Caco-2 (cell line): ENCODE measurements at regions of chr3 and their contacts with region 1.

Region 1: GRCh38 chr3:192917404-192918274 is at the start of gene MB21D2:
- DNase-seq: peak; percentile 84 to 86
- H3K4me3 ChIP-seq: peak within 1 kb of the TSS; percentile 95
- H3K4me3 Mint-ChIP-seq: peak within 1 kb of the TSS; percentile 100
- H3K27ac Mint-ChIP-seq: peak within 1 kb of the TSS; percentile 99
- H3K4me1 ChIP-seq: peaks cover 39% of the 10 kb centered on the region
- H3K4me1 Mint-ChIP-seq: peaks cover 34% of the 10 kb centered on the region
- H3K27me3 ChIP-seq: no peaks in the 10 kb centered on the region
- H3K27me3 Mint-ChIP-seq: no peaks in the 10 kb centered on the region
- CTCF ChIP-seq: no peak
- total RNA-seq, gene MB21D2: 10.6 and 11.0 TPM in 2 replicates

Region 2: DNA sequence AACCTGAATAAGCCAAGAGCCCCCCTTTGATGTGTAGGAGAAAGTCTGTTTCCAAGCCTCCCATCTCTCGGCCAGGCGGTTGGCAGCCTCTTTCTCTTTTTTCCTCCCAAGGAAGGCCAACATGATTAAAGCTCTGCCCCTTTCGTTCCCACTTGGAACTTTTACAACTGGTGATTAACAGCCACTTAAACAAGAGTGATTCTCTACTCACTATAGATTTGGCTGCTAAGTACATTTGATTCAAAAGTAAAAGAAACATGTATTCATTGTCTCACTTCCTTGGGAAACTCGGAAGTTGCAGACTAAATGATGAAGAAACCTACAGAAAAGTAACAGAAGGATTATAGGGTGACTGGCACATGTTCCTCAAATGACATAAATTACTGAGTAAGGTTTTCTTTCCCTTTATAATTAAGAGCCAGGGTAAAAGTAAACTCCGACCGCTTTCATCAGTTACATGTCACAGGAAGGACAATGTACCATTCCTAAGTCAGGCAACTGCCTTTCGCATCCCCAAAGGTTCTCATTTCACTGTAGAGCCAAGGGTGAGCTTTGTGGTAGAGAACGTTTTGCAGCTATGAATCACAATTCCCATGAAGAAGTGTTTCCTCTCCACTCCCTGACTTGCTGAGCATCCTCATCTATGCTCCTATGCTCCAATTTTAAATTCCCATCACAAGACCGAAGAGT is 72.7 kb before region 1 on chr3:
- CTCF ChIA-PET with region 1: no interaction called
- POLR2A ChIA-PET with region 1: no interaction called
- intact Hi-C with region 1: loop called (anchors 1 kb)
- DNase-seq: no peak
- H3K4me3 ChIP-seq: no peak overlapping the region
- H3K4me3 Mint-ChIP-seq: no peak overlapping the region
- H3K27ac Mint-ChIP-seq: no peak overlapping the region
- H3K4me1 ChIP-seq: peaks cover 30% of the 10 kb centered on the region
- H3K4me1 Mint-ChIP-seq: peaks cover 8% of the 10 kb centered on the region
- H3K27me3 ChIP-seq: no peaks in the 10 kb centered on the region
- H3K27me3 Mint-ChIP-seq: no peaks in the 10 kb centered on the region
- CTCF ChIP-seq: no peak

Region 3: DNA sequence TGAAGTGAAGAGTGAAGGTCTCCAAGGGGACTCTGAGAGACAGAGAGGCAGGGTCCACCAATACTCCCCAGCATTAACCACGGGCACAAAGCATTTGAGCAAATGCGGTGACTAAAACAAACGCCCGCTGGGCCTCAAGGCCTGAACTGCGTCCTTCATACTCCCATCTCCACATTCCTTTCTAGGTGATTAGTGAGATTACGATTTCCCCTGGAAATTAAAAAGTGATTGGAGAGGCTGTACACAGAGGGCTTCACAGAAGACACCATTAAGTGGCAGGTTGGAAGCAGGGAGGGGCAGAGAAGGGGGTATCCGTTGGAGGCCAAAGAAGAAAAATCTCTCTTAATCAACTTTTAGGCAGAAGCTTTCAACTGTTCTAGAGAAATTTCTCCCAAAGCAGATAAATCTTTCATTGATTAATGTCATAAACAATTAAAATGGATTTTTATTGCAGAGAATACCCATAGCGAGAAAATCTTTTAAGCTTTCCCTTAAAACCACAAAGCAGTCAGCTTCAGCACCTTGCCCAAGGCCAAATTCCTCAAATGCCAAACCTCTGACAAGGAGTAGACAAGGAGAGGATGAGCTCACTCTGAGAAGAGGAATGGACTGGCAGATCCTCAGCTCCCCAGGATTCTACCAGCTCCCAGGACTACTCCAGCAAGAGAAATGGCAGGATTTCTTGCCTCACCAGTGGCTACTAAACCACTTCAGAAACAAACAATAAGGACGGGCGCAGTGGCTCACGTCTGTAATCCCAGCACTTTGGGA is 38.1 kb before region 1 on chr3:
- CTCF ChIA-PET with region 1: interaction called, 3 read pairs
- POLR2A ChIA-PET with region 1: interaction called, 9 read pairs
- intact Hi-C with region 1: loop called (anchors 5 kb)
- DNase-seq: peak; percentile 82 to 87
- H3K4me3 ChIP-seq: no peak overlapping the region
- H3K4me3 Mint-ChIP-seq: peak overlapping the region; percentile 66
- H3K27ac Mint-ChIP-seq: no peak overlapping the region
- H3K4me1 ChIP-seq: peaks cover 38% of the 10 kb centered on the region
- H3K4me1 Mint-ChIP-seq: peaks cover 43% of the 10 kb centered on the region
- H3K27me3 ChIP-seq: no peaks in the 10 kb centered on the region
- H3K27me3 Mint-ChIP-seq: no peaks in the 10 kb centered on the region
- CTCF ChIP-seq: no peak

Region 4: GRCh38 chr3:192896689-192897431 is 20.8 kb before region 1 on chr3:
- CTCF ChIA-PET with region 1: interaction called, 3 read pairs
- POLR2A ChIA-PET with region 1: no interaction called
- intact Hi-C with region 1: loop called (anchors 1 kb)
- DNase-seq: peak; percentile 74 to 81
- H3K4me3 ChIP-seq: no peak overlapping the region
- H3K4me3 Mint-ChIP-seq: peak overlapping the region; percentile 60
- H3K27ac Mint-ChIP-seq: peak overlapping the region; percentile 89
- H3K4me1 ChIP-seq: peaks cover 59% of the 10 kb centered on the region
- H3K4me1 Mint-ChIP-seq: peaks cover 66% of the 10 kb centered on the region
- H3K27me3 ChIP-seq: no peaks in the 10 kb centered on the region
- H3K27me3 Mint-ChIP-seq: no peaks in the 10 kb centered on the region
- CTCF ChIP-seq: no peak

Region 5: GRCh38 chr3:193040836-193041672 is 123.4 kb after region 1 on chr3:
- CTCF ChIA-PET with region 1: interaction called, 4 read pairs
- POLR2A ChIA-PET with region 1: no interaction called
- intact Hi-C with region 1: loop called (anchors 1 kb)
- DNase-seq: peak in 1 of 2 experiments; percentile 63
- H3K4me3 ChIP-seq: no peak overlapping the region
- H3K4me3 Mint-ChIP-seq: no peak overlapping the region
- H3K27ac Mint-ChIP-seq: no peak overlapping the region
- H3K4me1 ChIP-seq: peaks cover 3% of the 10 kb centered on the region
- H3K4me1 Mint-ChIP-seq: peaks cover under 1% of the 10 kb centered on the region
- H3K27me3 ChIP-seq: no peaks in the 10 kb centered on the region
- H3K27me3 Mint-ChIP-seq: no peaks in the 10 kb centered on the region
- CTCF ChIP-seq: peak; percentile 47 to 49

Region 6: DNA sequence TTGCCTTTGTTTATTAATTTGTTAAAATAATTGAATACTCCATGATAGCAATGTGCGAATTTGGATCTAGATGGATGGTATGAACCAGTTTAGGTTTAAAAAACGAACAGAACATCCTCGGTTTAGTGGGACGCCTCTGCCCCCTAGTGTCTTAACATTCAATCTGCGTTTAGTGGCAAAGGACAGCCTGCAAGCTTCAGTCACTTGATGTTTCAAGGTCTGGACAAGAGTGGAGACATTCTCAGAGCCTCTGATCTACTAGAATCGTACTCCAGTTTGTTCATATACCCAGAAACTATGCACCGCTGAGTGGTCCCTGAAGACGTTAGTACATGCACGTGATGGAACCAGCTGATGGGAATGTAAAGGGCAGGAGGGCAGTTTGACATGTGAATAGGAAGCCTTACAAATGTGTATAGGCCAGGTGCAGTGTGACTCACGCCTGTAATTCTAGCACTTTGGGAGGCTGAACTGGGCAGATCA is 654.8 kb after region 1 on chr3:
- CTCF ChIA-PET with region 1: no interaction called
- POLR2A ChIA-PET with region 1: no interaction called
- intact Hi-C with region 1: loop called (anchors 1 kb)
- DNase-seq: peak; percentile 68 to 78
- H3K4me3 ChIP-seq: no peak overlapping the region
- H3K4me3 Mint-ChIP-seq: no peak overlapping the region
- H3K27ac Mint-ChIP-seq: no peak overlapping the region
- H3K4me1 ChIP-seq: no peaks in the 10 kb centered on the region
- H3K4me1 Mint-ChIP-seq: no peaks in the 10 kb centered on the region
- H3K27me3 ChIP-seq: no peaks in the 10 kb centered on the region
- H3K27me3 Mint-ChIP-seq: peaks cover 5% of the 10 kb centered on the region
- CTCF ChIP-seq: peak; percentile 77 to 82